Dorsolateral prefrontal cortex (tissue), 120 donors: ENCODE measurements at regions of chr2 and their contacts with region 1.

Region 1: DNA sequence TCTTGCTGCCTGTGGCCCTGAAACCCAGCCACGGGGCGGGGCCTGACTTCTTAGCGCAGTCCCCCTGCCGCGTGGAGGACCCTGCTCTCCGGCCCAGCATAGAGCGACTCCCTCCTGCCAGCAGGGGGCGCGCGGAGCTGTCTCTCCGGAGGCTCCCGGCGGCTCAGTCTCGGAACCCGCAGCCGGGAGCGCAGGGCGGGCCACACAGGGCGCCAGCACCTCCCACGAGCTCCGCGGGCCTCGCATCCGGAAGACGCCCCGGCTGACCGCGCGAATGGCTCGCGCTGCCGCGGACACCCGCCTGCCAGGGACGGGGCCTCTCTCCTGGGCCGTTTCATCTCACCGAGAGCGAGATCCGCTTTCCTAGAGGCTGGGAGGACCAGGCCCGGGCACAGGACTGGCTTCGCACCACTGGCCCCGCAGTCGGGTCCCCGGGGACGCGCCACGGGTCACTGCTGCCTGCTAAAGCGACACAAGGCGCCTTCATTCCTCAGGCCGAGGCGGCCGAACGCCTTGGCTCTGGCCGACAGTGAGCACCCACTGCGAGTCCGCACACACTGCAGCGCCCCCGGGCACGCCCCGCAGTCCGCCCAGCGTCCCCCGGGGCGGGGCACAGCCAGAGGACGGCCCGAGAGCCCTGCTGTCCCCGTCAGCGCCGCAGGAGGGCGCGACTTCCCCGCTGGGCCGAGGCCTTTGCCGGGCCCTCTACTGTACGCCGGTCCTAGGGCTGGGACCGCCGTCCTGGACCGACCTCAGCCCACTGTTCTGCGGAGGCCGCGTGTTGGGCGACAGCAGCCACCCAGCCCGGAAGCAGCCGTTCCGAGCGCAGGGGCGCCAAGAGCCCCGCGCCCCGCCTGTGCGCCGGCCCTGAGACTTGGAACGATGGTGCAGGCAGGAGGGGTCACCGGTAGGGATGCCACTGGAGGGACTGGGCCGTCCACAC is 39.0 kb upstream of the ARHGEF4 start:
- DNase-seq: peak; percentile 81 to 95 (median 90)
- H3K4me3 ChIP-seq: peak overlapping the region; percentile 56 to 99 (median 84)
- H3K27ac ChIP-seq: peak overlapping the region; percentile 76 to 99 (median 96)
- H3K27me3 ChIP-seq: no peaks in the 10 kb centered on the region
- CTCF ChIP-seq: peak; percentile 56 to 92 (median 81)

Region 2: DNA sequence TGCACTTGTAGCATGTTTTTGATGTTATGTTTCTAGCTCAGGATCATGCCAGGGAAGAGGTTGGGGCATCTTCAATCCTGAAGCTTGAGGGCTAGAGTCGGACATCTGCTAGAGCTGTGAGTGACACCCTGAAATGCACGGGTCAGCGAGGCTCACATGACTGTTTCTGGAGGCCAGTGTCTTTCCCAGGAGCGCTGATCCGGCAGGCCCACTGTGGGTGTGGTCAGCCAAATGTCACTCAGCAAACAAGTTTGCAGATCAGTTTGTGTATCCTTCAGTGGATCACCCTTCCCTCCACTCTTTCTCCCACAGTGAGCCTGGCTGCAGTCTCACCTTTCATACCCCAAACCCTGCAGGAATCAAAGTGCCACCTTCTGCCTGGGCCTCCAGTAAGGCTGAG is 16.0 kb after region 1 on chr2:
- intact Hi-C with region 1: no loop called
- DNase-seq: peak in 2 of 10 donors; percentile 17 to 31
- H3K4me3 ChIP-seq: no peak overlapping the region
- H3K27ac ChIP-seq: no peak overlapping the region
- H3K27me3 ChIP-seq: no peaks in the 10 kb centered on the region
- CTCF ChIP-seq: no peak

Region 3: GRCh38 chr2:130824492-130825061 is 26.8 kb after region 1 on chr2:
- intact Hi-C with region 1: loop called in 1 of 2 experiments (anchors 2 kb)
- DNase-seq: peak in 5 of 10 donors; percentile 54 to 72 (median 55)
- H3K4me3 ChIP-seq: no peak overlapping the region
- H3K27ac ChIP-seq: peak overlapping the region in 58 of 59 donors; percentile 42 to 95 (median 86)
- H3K27me3 ChIP-seq: peaks cover 0 to 5% (median 0%) of the 10 kb centered on the region in 45 donors
- CTCF ChIP-seq: no peak

Region 4: DNA sequence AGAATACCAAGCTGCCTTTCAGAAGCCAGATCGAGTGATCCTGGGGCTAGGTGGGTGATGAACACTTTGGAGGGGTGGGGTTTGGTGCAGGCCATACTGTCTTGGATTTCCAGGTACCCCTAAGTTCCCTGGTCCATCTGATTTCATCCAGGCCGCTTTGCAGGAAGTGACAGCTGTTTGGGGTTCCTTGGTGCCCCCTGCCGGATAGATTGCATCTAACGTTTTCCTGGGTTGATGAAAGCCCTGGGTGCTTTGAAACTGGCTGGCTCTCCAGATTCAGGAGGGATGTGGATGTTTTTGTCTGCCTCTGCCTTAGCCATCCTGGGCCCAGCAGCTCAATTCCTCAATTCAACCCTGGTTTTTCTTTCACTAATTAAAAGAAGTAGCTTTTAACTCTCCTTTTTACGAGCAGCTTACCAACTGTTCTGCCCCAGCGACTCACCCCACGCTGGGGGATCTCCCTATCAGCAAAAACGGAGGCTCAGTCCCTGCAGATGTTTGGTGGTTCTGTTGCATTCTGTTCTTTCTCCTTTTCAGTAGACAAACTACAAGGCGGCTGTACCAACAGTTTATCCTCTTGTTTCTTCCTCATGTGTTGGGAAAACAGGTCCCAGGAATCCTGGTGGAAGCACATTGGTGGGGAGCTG is 76.1 kb after region 1 on chr2:
- intact Hi-C with region 1: loop called (anchors 1 kb)
- DNase-seq: peak; percentile 64 to 88 (median 79)
- H3K4me3 ChIP-seq: no peak overlapping the region
- H3K27ac ChIP-seq: peak overlapping the region in 47 of 59 donors; percentile 4 to 92 (median 61)
- H3K27me3 ChIP-seq: no peaks in the 10 kb centered on the region
- CTCF ChIP-seq: peak; percentile 43 to 86 (median 73)

Region 5: GRCh38 chr2:130920415-130921163 is 122.8 kb after region 1 on chr2:
- intact Hi-C with region 1: loop called (anchors 1 to 2 kb)
- DNase-seq: peak; percentile 69 to 91 (median 82)
- H3K4me3 ChIP-seq: no peak overlapping the region
- H3K27ac ChIP-seq: peak overlapping the region in 6 of 59 donors; percentile 1 to 55 (median 22)
- H3K27me3 ChIP-seq: peaks cover 0 to 18% (median 5%) of the 10 kb centered on the region in 45 donors
- CTCF ChIP-seq: peak; percentile 76 to 97 (median 91)

Region 6: GRCh38 chr2:130951018-130951417 is 153.3 kb after region 1 on chr2:
- intact Hi-C with region 1: no loop called
- DNase-seq: no peak
- H3K4me3 ChIP-seq: no peak overlapping the region
- H3K27ac ChIP-seq: no peak overlapping the region
- H3K27me3 ChIP-seq: peaks cover 0 to 5% (median 0%) of the 10 kb centered on the region in 45 donors
- CTCF ChIP-seq: no peak

Region 7: DNA sequence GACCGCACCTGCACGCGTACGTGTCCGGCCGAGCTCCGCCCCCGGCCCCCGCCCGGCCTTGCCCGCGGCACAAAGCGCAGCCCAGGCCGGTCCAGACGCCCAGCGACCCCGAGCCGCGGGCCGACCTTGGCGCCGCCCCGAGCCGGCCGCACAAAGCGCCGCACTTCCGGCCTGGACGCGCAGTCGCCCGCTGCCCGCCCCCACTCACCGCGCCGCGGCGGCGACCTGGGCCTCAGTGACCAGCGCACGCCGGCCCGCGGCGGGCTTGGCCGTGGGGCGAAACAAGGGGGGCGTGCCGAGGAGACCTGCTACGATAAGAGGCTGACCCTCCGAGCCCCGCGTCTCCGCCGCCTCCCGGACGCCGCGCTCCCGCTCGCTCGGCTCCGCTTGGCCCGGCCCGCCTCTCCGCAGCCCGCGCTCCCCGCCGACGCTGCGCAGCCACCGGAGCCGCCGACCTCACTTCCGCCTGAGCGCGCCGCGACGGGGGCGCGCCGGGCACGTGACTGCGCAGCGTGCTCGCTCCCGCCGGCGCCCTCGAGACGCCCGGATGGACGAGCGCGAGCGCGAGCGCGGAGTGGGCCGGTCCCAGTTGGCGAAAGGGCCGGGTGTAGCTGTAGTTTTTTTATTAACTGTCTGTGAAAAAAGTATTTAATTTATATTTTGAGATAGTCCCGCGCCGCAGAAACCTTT is 295.4 kb after region 1 on chr2 and contains the start of gene FAM168B:
- intact Hi-C with region 1: loop called in 1 of 2 experiments (anchors 5 kb)
- DNase-seq: peak; percentile 63 to 89 (median 80)
- H3K4me3 ChIP-seq: peak within 1 kb of the TSS; percentile 59 to 97 (median 85)
- H3K27ac ChIP-seq: peak within 1 kb of the TSS; percentile 79 to 99 (median 97)
- H3K27me3 ChIP-seq: no peaks in the 10 kb centered on the region
- CTCF ChIP-seq: peak in 21 of 56 donors; percentile 4 to 58 (median 32)
- total RNA-seq, gene FAM168B: 119 to 220 (median 170) TPM

Region 8: DNA sequence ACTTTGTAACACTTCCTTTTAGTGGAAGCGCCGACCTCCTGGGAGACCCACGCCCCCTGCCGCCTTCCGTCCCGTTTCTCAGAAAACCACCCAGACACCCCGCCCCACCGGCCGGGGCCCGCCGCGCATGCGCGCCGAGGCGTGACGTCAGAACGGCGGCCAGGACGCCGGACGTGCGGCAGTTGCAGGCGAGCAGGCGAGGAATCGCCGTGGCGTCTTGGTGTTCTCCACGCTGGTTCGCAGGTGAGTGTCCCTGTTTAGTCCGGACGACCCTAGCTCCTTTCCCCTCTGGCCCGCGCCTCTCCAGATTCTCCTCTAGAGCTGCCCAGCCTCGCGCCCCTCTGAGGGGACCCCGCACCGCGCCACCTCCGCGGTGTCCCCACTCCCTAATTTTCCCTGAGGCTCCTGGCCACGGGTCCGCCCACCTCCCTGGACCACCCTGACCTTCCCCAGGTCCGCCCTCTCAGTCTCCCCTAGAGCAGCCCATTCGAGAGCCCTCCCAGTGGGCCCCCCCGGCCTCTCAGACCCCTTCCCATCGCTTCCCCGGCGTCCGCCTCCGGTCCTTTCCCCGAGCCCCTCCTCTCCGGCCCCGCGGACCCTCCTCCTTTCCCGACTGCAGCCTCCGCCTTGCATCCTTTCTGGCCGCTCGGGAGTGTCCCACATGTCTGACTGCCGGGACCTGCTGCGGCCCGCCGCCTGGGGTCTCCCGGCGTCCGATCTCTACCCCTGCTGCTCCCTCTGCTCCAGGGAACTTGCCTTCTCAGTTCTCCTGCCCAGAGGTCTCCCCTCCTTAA is 307.6 kb after region 1 on chr2 and contains the start of gene PLEKHB2:
- intact Hi-C with region 1: loop called in 1 of 2 experiments (anchors 10 kb)
- DNase-seq: peak; percentile 87 to 98 (median 90)
- H3K4me3 ChIP-seq: peak within 1 kb of the TSS; percentile 69 to 100 (median 97)
- H3K27ac ChIP-seq: peak within 1 kb of the TSS; percentile 53 to 98 (median 92)
- H3K27me3 ChIP-seq: no peaks in the 10 kb centered on the region
- CTCF ChIP-seq: peak in 50 of 56 donors; percentile 26 to 74 (median 48)
- total RNA-seq, gene PLEKHB2: 67.0 to 178 (median 121) TPM